ENCODE measurements at regions of chr7 and their contacts with region 1.

Region 1: GRCh38 chr7:148962823-148963582 is 65.3 kb downstream of the PDIA4 start:
- DNase-seq: peak; percentile 61 to 86 (median 72)
- ATAC-seq: peak; percentile 65
- H3K4me3 ChIP-seq: peak overlapping the region; percentile 49
- H3K27ac ChIP-seq: peak overlapping the region; percentile 62
- H3K4me1 ChIP-seq: peaks cover 16 to 32% of the 10 kb centered on the region in 2 experiments; a peak in 4 of 5 replicates
- H3K27me3 ChIP-seq: no peaks in the 10 kb centered on the region
- CTCF ChIP-seq: peak; percentile 89 to 98 (median 97)
- EP300 ChIP-seq: peak; percentile 41; the same call in 1 of the 2 replicates
- POLR2A ChIP-seq: no peak
- RAD21 ChIP-seq: peak; percentile 95 to 96

Region 2: DNA sequence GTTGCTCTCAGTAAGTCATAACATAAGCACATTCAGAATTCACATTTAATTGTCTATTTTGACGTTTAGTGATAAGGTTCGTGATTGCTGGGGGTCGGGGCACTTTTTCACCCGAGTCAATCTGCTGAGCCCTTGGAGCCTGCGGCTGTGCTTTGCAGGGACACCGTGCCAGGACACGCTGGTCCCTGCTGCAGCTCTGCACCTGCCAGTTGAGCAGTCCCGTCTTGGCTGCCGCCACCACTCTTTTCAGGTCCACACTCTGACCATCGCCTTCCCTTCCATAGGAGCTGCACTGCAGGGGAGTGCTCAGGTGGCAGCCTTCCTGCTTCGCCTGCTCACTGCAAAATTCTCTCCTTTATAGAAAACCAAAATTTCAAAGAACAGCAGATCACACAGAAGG is 227.9 kb before region 1 on chr7:
- CTCF ChIA-PET with region 1: no interaction called
- POLR2A ChIA-PET with region 1: no interaction called
- in situ Hi-C with region 1: no loop called
- intact Hi-C with region 1: no loop called
- DNase-seq: no peak
- ATAC-seq: no peak
- H3K4me3 ChIP-seq: no peak overlapping the region
- H3K27ac ChIP-seq: no peak overlapping the region
- H3K4me1 ChIP-seq: peaks cover 7 to 9% of the 10 kb centered on the region in 2 experiments; a peak in 3 of 5 replicates
- H3K27me3 ChIP-seq: no peaks in the 10 kb centered on the region
- CTCF ChIP-seq: no peak
- EP300 ChIP-seq: no peak
- POLR2A ChIP-seq: no peak
- RAD21 ChIP-seq: no peak

Region 3: GRCh38 chr7:148809856-148810255 is 153.1 kb before region 1 on chr7:
- CTCF ChIA-PET with region 1: interaction called, 4 read pairs
- POLR2A ChIA-PET with region 1: no interaction called
- in situ Hi-C with region 1: no loop called
- intact Hi-C with region 1: loop called (anchors 5 kb)
- DNase-seq: no peak
- ATAC-seq: no peak
- H3K4me3 ChIP-seq: no peak overlapping the region
- H3K27ac ChIP-seq: no peak overlapping the region
- H3K4me1 ChIP-seq: no peaks in the 10 kb centered on the region
- H3K27me3 ChIP-seq: no peaks in the 10 kb centered on the region
- CTCF ChIP-seq: no peak
- EP300 ChIP-seq: no peak
- POLR2A ChIP-seq: no peak
- RAD21 ChIP-seq: no peak